BJ (cell line): ENCODE measurements at regions of chr22 and their contacts with region 1.

Region 1: DNA sequence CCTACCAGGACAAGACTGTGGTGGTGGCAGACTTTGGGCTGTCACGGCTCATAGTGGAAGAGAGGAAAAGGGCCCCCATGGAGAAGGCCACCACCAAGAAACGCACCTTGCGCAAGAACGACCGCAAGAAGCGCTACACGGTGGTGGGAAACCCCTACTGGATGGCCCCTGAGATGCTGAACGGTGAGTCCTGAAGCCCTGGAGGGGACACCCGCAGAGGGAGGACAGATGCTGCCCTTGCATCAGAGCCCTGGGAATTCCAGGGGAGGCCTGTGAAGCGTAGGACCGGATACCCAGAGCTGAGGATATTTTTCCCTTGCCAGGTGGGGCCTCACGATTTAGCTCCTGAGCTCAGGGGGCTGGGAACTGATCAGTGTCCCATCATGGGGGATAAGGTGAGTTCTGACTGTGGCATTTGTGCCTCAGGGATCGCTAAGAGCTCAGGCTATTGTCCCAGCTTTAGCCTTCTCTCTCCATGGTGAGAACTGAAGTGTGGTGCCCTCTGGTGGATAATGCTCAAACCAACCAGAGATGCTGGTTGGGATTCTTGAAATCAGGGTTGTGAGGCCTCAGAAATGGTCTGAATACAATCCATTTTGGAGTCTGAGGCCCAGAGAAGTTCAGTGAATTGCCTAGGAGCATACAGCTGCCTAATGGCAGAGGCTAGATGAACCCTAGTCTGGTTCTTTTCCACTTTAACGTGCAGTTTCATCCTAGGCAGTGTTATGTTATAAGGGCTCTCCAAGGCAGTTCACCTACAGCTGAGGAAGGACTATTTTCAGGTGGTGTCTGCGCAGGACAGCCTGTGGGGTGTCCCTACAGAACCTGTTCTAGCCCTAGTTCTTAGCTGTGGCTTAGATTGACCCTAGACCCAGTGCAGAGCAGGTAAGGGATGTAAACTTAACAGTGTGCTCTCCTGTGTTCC is 19.5 kb downstream of the PIK3IP1 start:
- DNase-seq: no peak
- H3K4me3 ChIP-seq: no peak overlapping the region
- H3K27me3 ChIP-seq: no peaks in the 10 kb centered on the region
- CTCF ChIP-seq: peak; percentile 77

Region 2: DNA sequence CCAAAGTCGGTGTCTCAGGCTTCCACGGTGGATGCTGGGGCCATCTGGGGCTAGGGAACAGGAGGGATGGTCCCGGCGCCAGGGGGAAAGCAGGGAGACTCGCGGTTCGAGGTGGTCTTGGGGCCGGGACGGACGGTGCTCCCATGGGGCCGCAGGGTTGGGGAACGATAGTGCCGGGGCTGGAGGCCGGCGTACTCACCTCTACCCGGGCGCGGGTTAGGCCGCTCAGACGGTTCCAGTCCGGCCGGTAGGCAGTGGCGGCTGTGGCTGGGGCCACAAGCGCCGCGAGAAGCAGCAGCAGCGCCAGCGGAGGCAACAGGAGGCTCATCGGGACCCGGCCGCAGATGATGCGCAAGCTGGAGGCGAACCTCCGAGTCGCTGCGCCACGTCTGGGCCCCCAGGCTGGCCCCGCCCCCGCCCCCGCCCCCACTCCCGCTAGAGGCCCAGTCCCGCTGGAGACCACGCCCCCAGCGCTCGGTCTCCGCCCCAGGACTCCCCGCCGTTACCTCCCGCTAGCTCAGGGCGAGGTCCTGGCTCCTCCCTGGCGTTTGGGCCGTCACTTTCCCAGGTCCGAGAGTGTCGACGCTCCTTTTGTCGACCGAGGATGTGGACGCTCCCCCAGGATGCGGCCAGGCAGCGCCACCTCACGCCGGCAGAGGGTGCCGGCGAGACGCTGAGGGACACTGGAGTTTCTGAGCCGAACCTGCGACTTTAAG is 165.4 kb before region 1 on chr22 and contains the start of gene SELENOM:
- CTCF ChIA-PET with region 1: interaction called, 10 read pairs
- POLR2A ChIA-PET with region 1: interaction called, 6 read pairs
- DNase-seq: peak; percentile 89
- H3K4me3 ChIP-seq: peak within 1 kb of the TSS; percentile 85
- H3K27me3 ChIP-seq: no peaks in the 10 kb centered on the region
- CTCF ChIP-seq: peak; percentile 99
- polyA plus RNA-seq, gene SELENOM: 215 and 292 TPM in 2 replicates

Region 3: GRCh38 chr22:31211862-31212730 is 60.7 kb before region 1 on chr22 and contains the start of gene LIMK2:
- CTCF ChIA-PET with region 1: interaction called, 78 read pairs
- POLR2A ChIA-PET with region 1: no interaction called
- DNase-seq: peak; percentile 21
- H3K4me3 ChIP-seq: peak within 1 kb of the TSS; percentile 91
- H3K27me3 ChIP-seq: no peaks in the 10 kb centered on the region
- CTCF ChIP-seq: peak; percentile 83
- polyA plus RNA-seq, gene LIMK2: 5.2 and 5.5 TPM in 2 replicates

Region 4: DNA sequence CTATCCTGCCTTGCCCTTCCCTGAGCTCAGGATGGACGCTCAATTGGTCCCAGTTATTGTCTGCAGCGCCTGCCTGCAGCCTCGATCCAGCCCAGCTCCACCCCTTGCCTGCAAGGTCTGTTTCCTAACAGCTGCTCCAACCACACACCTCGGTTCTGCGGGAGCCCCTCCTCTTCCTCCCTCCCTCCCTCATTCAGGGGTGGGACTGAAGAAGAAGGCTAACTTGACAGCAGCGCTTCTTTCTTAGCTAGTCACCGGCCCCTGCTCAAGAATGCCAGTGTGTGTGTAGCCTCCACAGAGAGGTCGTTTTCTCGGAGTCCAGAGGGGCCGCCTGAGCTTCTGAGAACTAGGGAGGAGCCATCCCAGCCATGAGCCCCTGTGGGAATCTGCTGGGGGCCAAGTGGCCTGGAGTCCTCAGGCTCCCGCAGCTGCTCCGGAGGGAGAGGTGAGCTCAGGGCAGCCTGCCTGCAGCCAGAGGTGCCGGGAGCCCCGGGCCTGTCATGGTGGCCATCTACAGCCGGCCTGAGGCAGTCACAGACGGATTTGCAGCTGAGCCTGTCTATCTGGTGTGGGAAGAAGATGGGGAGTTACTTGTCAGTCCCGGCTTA is 24.5 kb before region 1 on chr22:
- CTCF ChIA-PET with region 1: interaction called, 70 read pairs
- POLR2A ChIA-PET with region 1: no interaction called
- DNase-seq: peak; percentile 75
- H3K4me3 ChIP-seq: peak overlapping the region; percentile 46
- H3K27me3 ChIP-seq: no peaks in the 10 kb centered on the region
- CTCF ChIP-seq: no peak

Region 5: DNA sequence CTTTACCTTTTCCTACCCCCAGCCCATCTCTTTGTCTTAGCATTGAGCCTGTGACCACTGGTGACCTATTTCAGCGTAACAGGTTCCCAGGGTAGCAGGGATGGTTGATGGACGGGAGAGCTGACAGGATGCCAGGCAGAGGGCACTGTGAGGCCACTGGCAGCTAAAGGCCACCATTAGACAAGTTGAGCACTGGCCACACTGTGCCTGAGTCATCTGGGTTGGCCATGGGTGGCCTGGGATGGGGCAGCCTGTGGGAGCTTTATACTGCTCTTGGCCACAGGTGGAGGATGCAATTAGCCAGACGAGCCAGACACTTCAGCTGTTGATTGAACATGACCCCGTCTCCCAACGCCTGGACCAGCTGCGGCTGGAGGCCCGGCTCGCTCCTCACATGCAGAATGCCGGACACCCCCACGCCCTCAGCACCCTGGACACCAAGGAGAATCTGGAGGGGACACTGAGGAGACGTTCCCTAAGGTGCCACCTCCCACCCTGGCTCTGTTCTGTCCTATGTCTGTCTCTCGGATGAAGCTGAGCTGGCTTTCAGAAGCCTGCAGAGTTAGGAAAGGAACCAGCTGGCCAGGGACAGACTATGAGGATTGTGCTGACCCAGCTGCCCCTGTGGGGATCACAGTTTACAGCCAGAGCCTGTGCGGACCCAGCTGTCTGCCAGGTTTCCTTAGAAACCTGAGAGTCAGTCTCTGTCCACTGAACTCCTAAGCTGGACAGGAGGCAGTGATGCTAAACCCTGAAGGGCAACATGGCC is 10.3 kb before region 1 on chr22:
- CTCF ChIA-PET with region 1: interaction called, 16 read pairs
- POLR2A ChIA-PET with region 1: interaction called, 3 read pairs
- DNase-seq: no peak
- H3K4me3 ChIP-seq: no peak overlapping the region
- H3K27me3 ChIP-seq: no peaks in the 10 kb centered on the region
- CTCF ChIP-seq: no peak

Region 6: GRCh38 chr22:31313366-31314147 is 40.8 kb after region 1 on chr22:
- CTCF ChIA-PET with region 1: interaction called, 19 read pairs
- POLR2A ChIA-PET with region 1: no interaction called
- DNase-seq: no peak
- H3K4me3 ChIP-seq: no peak overlapping the region
- H3K27me3 ChIP-seq: no peaks in the 10 kb centered on the region
- CTCF ChIP-seq: peak; percentile 90